ENCODE measurements at regions of chr17 and their contacts with region 1.

Region 1: DNA sequence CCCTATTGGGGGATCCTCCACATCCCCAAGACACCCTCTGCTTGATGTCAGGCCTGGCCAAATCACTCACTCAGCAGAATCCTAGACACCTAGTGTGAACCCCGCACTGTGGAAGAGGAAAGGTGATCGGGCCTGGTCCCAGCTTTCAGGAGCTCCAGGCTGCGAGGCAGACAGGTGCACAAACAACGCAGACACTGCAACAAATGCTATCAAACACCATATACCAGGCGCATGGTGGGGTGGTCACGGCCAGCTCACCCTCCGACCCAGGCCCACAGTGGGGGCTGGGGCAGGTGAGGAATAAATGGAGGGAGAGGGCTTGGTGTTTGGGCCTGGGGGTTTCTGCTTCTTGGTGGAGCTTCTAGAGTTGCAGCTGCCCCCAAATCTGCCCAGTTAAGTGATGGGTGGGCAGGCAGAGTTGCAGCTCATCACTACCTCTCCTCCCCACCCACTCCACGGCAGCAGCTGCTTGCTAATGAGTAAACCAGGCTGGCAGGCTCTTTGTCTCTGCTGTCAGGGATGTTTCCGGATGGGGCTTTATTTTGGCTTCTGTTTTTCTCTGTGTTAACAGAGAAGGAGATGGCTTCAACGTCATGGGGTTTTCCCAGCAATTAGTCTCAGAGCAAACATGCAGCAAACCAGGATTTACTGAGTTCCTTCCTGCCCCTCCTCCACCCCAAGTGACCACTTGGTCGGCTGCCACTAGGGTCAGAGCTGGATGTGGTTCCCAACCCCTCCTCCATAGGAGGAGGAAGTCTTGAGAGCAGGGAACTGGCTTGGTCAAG is 46.6 kb downstream of the PECAM1 start:
- DNase-seq: peak; percentile 59 to 75 (median 68)
- H3K4me3 ChIP-seq: no peak overlapping the region
- H3K27ac ChIP-seq: peak overlapping the region in 1 of 2 donors; percentile 42
- H3K4me1 ChIP-seq: peaks cover 8% of the 10 kb centered on the region
- H3K27me3 ChIP-seq: no peaks in the 10 kb centered on the region
- CTCF ChIP-seq: no peak
- EP300 ChIP-seq: no peak
- POLR2A ChIP-seq: no peak

Region 2: GRCh38 chr17:64196626-64197025 is 147.4 kb before region 1 on chr17:
- intact Hi-C with region 1: no loop called
- DNase-seq: no peak
- H3K4me3 ChIP-seq: no peak overlapping the region
- H3K27ac ChIP-seq: no peak overlapping the region
- H3K4me1 ChIP-seq: no peaks in the 10 kb centered on the region
- H3K27me3 ChIP-seq: no peaks in the 10 kb centered on the region
- CTCF ChIP-seq: no peak
- EP300 ChIP-seq: no peak
- POLR2A ChIP-seq: no peak

Region 3: GRCh38 chr17:64326395-64327054 is 17.5 kb before region 1 on chr17:
- intact Hi-C with region 1: no loop called
- DNase-seq: peak; percentile 47 to 77 (median 62)
- H3K4me3 ChIP-seq: no peak overlapping the region
- H3K27ac ChIP-seq: peak overlapping the region; percentile 62 to 87
- H3K4me1 ChIP-seq: peaks cover 22% of the 10 kb centered on the region
- H3K27me3 ChIP-seq: no peaks in the 10 kb centered on the region
- CTCF ChIP-seq: no peak
- EP300 ChIP-seq: peak; percentile 68
- POLR2A ChIP-seq: no peak

Region 4: DNA sequence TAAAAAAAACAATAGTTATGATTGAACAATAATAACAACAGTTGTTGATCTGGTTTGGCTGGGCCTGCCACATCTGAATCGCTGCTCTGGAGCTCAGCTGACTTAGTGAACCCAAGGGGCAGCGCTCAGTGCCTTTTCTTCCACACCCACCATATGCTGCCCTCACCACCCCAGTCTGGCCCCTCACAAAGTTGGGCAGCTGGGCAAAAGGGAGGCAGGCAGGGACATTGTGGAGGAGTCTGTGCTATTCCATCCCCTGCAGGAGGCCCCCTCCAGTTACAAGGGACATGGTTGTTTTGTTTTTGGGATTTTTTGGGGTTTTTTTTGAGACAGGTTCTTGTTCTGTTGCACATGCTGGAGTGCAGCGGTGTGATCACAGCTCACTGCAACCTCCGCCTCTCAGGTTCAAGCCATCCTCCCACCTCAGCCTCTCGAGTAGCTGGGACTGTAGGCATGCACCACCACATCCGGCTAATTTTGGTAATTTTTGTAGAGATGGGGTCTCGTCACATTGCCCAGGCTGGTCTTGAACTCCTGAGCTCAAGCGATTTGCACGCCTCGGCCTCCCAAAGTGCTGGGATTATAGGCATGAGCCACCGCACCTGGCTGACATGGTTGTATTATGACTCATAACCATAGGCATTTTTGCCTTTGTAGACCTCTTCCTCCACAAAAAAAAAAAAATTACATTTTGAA is 55.2 kb after region 1 on chr17:
- intact Hi-C with region 1: loop called in 1 of 4 experiments (anchors 10 kb)
- DNase-seq: no peak
- H3K4me3 ChIP-seq: no peak overlapping the region
- H3K27ac ChIP-seq: no peak overlapping the region
- H3K4me1 ChIP-seq: no peaks in the 10 kb centered on the region
- H3K27me3 ChIP-seq: no peaks in the 10 kb centered on the region
- CTCF ChIP-seq: no peak
- EP300 ChIP-seq: no peak
- POLR2A ChIP-seq: no peak

Region 5: GRCh38 chr17:64411999-64412771 is 68.1 kb after region 1 on chr17:
- intact Hi-C with region 1: no loop called
- DNase-seq: peak in 4 of 5 donors; percentile 58 to 66 (median 64)
- H3K4me3 ChIP-seq: no peak overlapping the region
- H3K27ac ChIP-seq: peak overlapping the region; percentile 56 to 67
- H3K4me1 ChIP-seq: peaks cover 15% of the 10 kb centered on the region
- H3K27me3 ChIP-seq: no peaks in the 10 kb centered on the region
- CTCF ChIP-seq: no peak
- EP300 ChIP-seq: no peak
- POLR2A ChIP-seq: no peak